ENCODE measurements at regions of chr1 and their contacts with region 1.

Region 1: DNA sequence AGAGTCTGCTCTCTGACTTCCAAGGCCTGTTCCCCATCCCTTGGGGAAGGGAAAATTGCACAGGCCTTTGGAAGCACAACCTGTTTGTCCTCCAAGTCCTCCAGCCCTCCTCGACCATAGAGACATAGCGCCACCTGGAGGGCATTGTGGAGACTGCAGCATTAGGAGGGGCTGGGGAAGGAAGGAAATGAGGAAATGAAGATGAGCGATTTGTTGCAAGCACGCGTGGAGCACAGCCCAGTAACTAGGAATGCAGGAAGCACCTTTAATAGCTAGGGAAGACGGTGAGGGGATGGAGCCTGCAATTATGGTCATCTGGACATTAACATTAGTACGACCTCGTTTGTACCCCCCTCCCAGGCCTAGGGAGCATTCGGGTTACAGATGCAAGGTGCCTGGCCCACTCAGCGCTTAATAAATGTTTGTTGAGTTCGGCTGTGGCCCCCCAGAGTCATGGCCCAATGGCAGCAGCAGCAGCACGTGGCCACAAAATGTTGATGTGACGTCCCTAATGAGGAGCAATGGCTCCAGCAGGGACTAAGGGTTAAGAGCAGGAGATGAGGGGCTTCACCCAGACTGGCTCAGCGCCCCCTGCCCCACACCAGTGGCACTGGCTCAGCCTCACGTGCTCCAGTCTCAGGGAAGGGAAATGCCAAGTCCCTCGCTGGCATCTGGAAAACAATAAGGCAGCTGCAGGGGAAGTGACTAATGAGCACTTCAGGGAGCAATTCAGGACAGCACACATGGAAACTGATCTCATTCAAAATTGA is 8.0 kb upstream of the CAMK2N1 start:
- DNase-seq: peak; percentile 59 to 90
- H3K4me3 ChIP-seq: no peak overlapping the region
- H3K4me1 ChIP-seq: peaks cover 6% of the 10 kb centered on the region; the same call in 1 of the 2 replicates
- H3K27me3 ChIP-seq: no peaks in the 10 kb centered on the region

Region 2: GRCh38 chr1:19918057-19918456 is 576.0 kb before region 1 on chr1:
- in situ Hi-C with region 1: loop called (anchors 5 kb)
- DNase-seq: peak; percentile 62 to 89
- H3K4me3 ChIP-seq: no peak overlapping the region
- H3K4me1 ChIP-seq: no peaks in the 10 kb centered on the region
- H3K27me3 ChIP-seq: no peaks in the 10 kb centered on the region

Region 3: GRCh38 chr1:20216574-20216973 is 277.4 kb before region 1 on chr1:
- in situ Hi-C with region 1: loop called (anchors 5 kb)
- DNase-seq: peak in 1 of 2 experiments; percentile 10
- H3K4me3 ChIP-seq: no peak overlapping the region
- H3K4me1 ChIP-seq: no peaks in the 10 kb centered on the region
- H3K27me3 ChIP-seq: peaks cover 32% of the 10 kb centered on the region

Region 4: DNA sequence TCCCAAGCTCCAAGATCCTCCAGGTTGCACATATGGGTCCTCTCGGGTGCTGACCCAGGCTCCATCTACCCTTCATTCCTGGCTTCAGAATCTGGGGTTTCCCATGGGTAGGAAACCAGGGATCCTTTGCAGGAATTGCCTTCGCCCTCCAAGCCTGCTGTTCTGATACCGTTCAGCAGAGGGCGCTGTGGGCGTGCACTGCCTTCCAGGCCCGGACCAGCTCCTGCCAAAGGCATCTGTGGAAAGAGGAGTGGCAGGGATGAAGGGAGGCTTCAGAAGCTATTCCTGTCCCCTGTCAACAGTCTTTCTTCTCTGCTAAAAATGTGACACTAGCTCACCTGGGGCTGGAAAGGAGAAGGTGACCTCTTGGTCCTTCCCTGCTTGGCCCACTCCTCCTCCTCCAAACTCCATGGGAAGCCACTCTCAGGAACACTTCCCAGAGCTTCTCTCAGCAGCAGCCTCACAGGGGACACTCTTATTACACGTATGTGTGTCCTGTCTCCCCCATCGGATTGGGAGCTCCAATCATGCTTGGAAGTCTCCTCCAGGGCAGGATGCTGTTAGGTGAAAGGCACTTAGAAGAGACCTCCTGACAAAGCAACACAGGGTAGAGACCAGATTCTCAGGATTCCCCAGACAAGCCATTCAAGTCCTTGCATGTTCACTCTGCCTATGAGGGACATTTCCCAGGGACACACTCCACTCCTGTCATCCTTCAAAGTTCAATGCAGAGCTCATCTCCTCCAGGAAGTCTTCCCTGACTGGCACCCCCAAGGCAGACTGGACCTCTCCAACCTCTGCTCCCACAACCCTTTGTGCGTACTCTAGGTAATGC is 132.0 kb before region 1 on chr1:
- in situ Hi-C with region 1: loop called (anchors 5 kb)
- DNase-seq: peak; percentile 7 to 81
- H3K4me3 ChIP-seq: no peak overlapping the region
- H3K4me1 ChIP-seq: no peaks in the 10 kb centered on the region
- H3K27me3 ChIP-seq: peaks cover 49% of the 10 kb centered on the region

Region 5: DNA sequence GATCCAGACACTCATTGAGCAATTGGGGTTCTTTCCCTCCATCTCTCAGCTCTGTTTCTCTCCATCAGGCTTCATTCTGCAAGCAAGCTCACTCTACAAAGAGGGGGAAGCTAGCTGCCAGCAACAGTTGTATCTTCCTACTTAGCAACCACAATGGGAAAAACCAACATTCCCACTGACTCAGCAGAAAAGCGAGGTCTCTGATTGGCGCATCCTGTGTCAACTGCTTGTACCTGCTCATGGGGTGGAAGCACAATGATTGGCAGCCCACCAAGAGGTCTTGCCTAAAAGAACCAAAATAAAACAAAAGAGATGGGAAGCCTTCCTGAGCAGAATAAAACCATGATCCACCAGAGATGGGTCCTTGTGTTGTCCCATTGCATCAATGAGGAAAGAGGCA is 90.9 kb after region 1 on chr1:
- in situ Hi-C with region 1: no loop called
- DNase-seq: no peak
- H3K4me3 ChIP-seq: no peak overlapping the region
- H3K4me1 ChIP-seq: peaks cover 7% of the 10 kb centered on the region
- H3K27me3 ChIP-seq: 0 out of 2 replicates have a peak, but pooled peaks cover 7% of the 10 kb centered on the region

Measured in HAP-1 (cell line).